ENCODE measurements at regions of chr17 and their contacts with region 1.

Region 1: DNA sequence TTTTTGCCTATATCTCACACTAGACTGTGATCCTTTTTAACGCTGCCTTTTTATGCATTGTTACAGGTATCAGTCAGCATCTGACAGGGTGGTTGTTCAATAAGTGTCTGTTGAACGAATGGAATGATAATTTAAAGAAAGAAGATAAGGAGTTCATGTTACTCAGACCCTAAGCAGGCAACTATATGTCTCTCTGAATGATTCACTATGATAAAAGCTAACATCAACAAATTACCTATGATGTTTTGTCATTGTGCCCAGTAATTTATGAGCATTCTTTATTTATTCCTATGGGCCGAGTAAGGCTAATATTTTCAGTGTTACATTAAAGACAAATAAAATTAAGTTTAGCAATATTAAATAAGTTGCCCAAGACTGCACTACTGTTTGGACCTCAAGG is 435.0 kb upstream of the KIF2B start:
- DNase-seq: no peak
- H3K4me3 ChIP-seq: no peak overlapping the region
- CTCF ChIP-seq: no peak

Region 2: GRCh38 chr17:53316073-53316472 is 71.7 kb before region 1 on chr17:
- in situ Hi-C with region 1: loop called (anchors 5 kb)
- DNase-seq: no peak
- H3K4me3 ChIP-seq: no peak overlapping the region
- CTCF ChIP-seq: no peak

Region 3: GRCh38 chr17:53472586-53472985 is 84.8 kb after region 1 on chr17:
- in situ Hi-C with region 1: no loop called
- DNase-seq: peak; percentile 16
- H3K4me3 ChIP-seq: no peak overlapping the region
- CTCF ChIP-seq: no peak